A549 (cell line): ENCODE measurements at regions of chr1 and their contacts with region 1.

Region 1: DNA sequence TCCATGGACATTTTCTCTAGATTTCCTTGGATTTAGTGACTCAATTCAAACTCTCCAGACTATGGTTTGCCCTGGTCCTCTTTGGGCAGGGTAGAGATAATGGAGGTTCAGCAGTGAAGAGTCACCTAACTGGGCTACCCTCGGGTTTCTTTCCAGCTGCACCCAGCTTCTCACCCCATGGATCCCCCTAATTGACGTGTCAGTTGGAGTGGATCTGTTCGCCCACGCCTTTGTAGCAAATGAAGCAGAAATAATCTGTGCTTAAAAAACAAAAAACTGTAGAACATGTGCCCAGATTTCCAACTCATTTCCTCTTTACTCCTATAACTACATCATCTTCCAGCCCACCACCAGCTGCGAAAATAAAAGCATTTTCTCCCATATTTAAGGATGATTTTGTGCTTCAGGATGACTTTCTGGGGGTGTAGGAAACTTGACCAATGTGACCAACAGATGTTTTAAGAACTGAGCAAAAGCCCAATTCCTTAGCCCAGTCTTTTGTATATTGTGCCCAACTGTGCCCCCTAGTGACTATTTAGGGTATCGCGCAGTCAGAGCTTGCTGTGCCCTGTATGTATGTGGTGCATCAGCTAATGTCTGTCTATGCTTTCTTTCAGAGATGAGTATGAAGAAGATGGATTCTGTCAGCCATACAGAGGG is 66.5 kb upstream of the UBE2U start:
- DNase-seq: peak; percentile 28 to 64
- ATAC-seq: peak; percentile 74 to 86; a peak in 4 of 6 replicates
- H3K4me3 ChIP-seq: no peak overlapping the region
- H3K27ac ChIP-seq: peak overlapping the region; percentile 53 to 63; a peak in 5 of 6 replicates
- H3K4me1 ChIP-seq: peaks cover 38% of the 10 kb centered on the region
- CTCF ChIP-seq: peak; percentile 72
- EP300 ChIP-seq: no peak
- POLR2A ChIP-seq: no peak
- RAD21 ChIP-seq: peak; percentile 77 to 81

Region 2: DNA sequence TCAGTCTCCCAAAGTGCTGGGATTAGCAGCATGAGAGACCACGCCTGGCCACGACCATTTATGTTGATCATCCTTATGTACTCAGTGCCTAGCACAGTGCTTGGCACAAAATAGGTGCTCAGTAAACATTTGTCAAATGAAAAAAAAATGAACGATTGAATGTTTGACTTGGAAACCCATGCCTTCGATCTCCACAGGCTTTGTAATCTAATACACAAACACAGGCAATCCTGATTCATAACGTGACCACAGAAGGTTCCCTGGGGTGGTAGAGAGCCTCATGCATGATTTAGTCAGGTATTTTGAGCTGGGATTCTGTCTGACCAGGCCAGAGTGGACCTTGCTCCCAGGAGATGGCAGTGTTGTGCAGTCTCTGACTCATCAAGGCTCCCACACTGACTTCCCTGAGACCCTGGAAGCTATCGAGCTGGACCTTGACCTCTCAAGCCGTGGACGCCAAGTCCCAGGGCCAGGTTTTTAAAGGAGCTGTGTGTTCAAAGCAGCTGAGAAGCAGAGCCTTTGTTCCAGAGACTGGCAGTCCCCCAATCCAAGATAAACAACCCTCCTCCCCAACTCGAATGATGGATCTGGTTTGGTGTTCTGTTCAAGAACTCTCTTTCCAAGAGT is 462.5 kb before region 1 on chr1:
- CTCF ChIA-PET with region 1: interaction called, 11 read pairs
- POLR2A ChIA-PET with region 1: no interaction called
- DNase-seq: peak; percentile 80 to 84
- ATAC-seq: peak; percentile 99
- H3K4me3 ChIP-seq: no peak overlapping the region
- H3K27ac ChIP-seq: peak overlapping the region; percentile 81 to 86
- H3K4me1 ChIP-seq: peaks cover 17% of the 10 kb centered on the region
- CTCF ChIP-seq: peak; percentile 76
- EP300 ChIP-seq: no peak
- POLR2A ChIP-seq: no peak
- RAD21 ChIP-seq: peak; percentile 91 to 93

Region 3: DNA sequence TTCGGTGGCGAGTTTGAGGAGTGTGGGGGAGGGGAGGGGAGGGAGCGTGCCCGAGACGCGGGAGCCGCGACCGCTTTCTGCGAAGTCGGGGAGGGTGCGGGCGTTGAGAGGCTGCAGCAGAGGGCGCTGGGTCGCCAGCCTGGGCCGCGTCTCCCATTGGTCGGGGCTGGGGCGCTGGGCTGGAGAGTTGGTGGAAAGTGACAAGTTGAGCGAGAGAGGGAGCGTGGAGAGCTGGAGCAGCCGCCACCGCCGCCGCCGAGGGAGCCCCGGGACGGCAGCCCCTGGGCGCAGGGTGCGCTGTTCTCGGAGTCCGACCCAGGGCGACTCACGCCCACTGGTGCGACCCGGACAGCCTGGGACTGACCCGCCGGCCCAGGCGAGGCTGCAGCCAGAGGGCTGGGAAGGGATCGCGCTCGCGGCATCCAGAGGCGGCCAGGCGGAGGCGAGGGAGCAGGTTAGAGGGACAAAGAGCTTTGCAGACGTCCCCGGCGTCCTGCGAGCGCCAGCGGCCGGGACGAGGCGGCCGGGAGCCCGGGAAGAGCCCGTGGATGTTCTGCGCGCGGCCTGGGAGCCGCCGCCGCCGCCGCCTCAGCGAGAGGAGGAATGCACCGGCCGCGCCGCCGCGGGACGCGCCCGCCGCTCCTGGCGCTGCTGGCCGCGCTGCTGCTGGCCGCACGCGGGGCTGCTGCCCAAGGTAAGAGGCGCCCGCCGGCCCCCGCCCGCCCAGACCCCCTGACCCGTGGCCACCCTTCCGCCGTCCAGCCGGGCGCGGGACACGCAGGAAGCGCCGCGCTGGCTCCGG is 362.9 kb before region 1 on chr1 and contains the start of gene ROR1:
- CTCF ChIA-PET with region 1: interaction called, 11 read pairs
- POLR2A ChIA-PET with region 1: no interaction called
- DNase-seq: peak; percentile 81 to 89
- ATAC-seq: peak; percentile 96 to 98
- H3K4me3 ChIP-seq: peak within 1 kb of the TSS; percentile 83
- H3K27ac ChIP-seq: peak within 1 kb of the TSS; percentile 95 to 96
- H3K4me1 ChIP-seq: peaks cover 54% of the 10 kb centered on the region
- CTCF ChIP-seq: peak; percentile 51
- EP300 ChIP-seq: no peak
- POLR2A ChIP-seq: peak; percentile 35; the same call in 1 of the 2 replicates
- RAD21 ChIP-seq: peak; percentile 61 to 78
- polyA plus RNA-seq, gene ROR1: 19.0 and 29.3 TPM in 2 replicates

Region 4: GRCh38 chr1:63935143-63935542 is 201.7 kb before region 1 on chr1:
- CTCF ChIA-PET with region 1: interaction called, 17 read pairs
- POLR2A ChIA-PET with region 1: no interaction called
- DNase-seq: peak in 1 of 2 experiments; percentile 33
- ATAC-seq: peak; percentile 81 to 85; a peak in 5 of 6 replicates
- H3K4me3 ChIP-seq: no peak overlapping the region
- H3K27ac ChIP-seq: no peak overlapping the region
- H3K4me1 ChIP-seq: peaks cover 37% of the 10 kb centered on the region
- CTCF ChIP-seq: peak; percentile 32; the same call in 1 of the 3 replicates
- EP300 ChIP-seq: no peak
- POLR2A ChIP-seq: no peak
- RAD21 ChIP-seq: peak; percentile 41 to 44; a peak in 4 of 5 replicates

Region 5: GRCh38 chr1:64124704-64125440 is 12.0 kb before region 1 on chr1:
- CTCF ChIA-PET with region 1: interaction called, 11 read pairs
- POLR2A ChIA-PET with region 1: no interaction called
- DNase-seq: no peak
- ATAC-seq: no peak
- H3K4me3 ChIP-seq: no peak overlapping the region
- H3K27ac ChIP-seq: no peak overlapping the region
- H3K4me1 ChIP-seq: no peaks in the 10 kb centered on the region
- CTCF ChIP-seq: no peak
- EP300 ChIP-seq: no peak
- POLR2A ChIP-seq: no peak
- RAD21 ChIP-seq: no peak